Breast epithelium (tissue), 4 donors: ENCODE measurements at regions of chr2 and their contacts with region 1.

Region 1: DNA sequence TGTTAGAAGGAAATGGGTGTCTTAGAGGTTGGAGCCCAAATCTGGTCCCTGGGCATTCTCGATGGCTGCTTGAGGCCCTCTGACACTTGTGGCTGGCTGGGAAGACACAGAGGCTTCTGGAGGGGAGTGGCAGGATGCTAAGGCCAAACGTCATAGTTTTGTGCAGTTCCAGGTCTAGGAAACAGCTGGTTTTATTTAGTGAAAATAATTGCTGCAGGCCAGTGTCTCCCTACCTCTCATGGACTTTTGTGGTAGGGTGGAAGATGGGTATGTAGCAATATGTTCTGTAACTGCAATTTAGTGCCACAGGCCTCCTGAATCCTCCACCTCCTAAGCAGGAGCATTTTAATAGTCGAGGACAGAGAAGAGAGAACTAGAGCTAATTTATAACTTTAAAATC is 32.2 kb upstream of the SPRED2 start:
- DNase-seq: no peak
- H3K4me3 ChIP-seq: no peak overlapping the region
- H3K27ac ChIP-seq: no peak overlapping the region
- H3K4me1 ChIP-seq: no peaks in the 10 kb centered on the region
- H3K27me3 ChIP-seq: no peaks in the 10 kb centered on the region
- CTCF ChIP-seq: no peak
- POLR2A ChIP-seq: no peak

Region 2: GRCh38 chr2:63801455-63801854 is 1663.1 kb before region 1 on chr2:
- intact Hi-C with region 1: loop called (anchors 5 kb)
- DNase-seq: no peak
- H3K4me3 ChIP-seq: no peak overlapping the region
- H3K27ac ChIP-seq: no peak overlapping the region
- H3K4me1 ChIP-seq: no peaks in the 10 kb centered on the region
- H3K27me3 ChIP-seq: no peaks in the 10 kb centered on the region
- CTCF ChIP-seq: no peak
- POLR2A ChIP-seq: no peak

Region 3: GRCh38 chr2:63993871-63994270 is 1470.7 kb before region 1 on chr2:
- intact Hi-C with region 1: no loop called
- DNase-seq: no peak
- H3K4me3 ChIP-seq: no peak overlapping the region
- H3K27ac ChIP-seq: no peak overlapping the region
- H3K4me1 ChIP-seq: no peaks in the 10 kb centered on the region
- H3K27me3 ChIP-seq: no peaks in the 10 kb centered on the region
- CTCF ChIP-seq: no peak
- POLR2A ChIP-seq: no peak